ENCODE measurements at regions of chr11 and their contacts with region 1.

Region 1: GRCh38 chr11:23789938-23790371 is 706.9 kb upstream of the LUZP2 start:
- DNase-seq: no peak
- H3K4me3 ChIP-seq: no peak overlapping the region
- H3K27ac ChIP-seq: no peak overlapping the region
- H3K4me1 ChIP-seq: no peaks in the 10 kb centered on the region
- H3K27me3 ChIP-seq: no peaks in the 10 kb centered on the region
- CTCF ChIP-seq: no peak
- POLR2A ChIP-seq: no peak

Region 2: GRCh38 chr11:23021287-23021863 is 768.6 kb before region 1 on chr11:
- intact Hi-C with region 1: loop called (anchors 5 kb)
- DNase-seq: no peak
- H3K4me3 ChIP-seq: no peak overlapping the region
- H3K27ac ChIP-seq: no peak overlapping the region
- H3K4me1 ChIP-seq: no peaks in the 10 kb centered on the region
- H3K27me3 ChIP-seq: no peaks in the 10 kb centered on the region
- CTCF ChIP-seq: no peak
- POLR2A ChIP-seq: no peak

Region 3: GRCh38 chr11:25038131-25038530 is 1248.2 kb after region 1 on chr11:
- intact Hi-C with region 1: no loop called
- DNase-seq: no peak
- H3K4me3 ChIP-seq: no peak overlapping the region
- H3K27ac ChIP-seq: no peak overlapping the region
- H3K4me1 ChIP-seq: no peaks in the 10 kb centered on the region
- H3K27me3 ChIP-seq: no peaks in the 10 kb centered on the region
- CTCF ChIP-seq: no peak
- POLR2A ChIP-seq: no peak